Activated B cell treated with CpG ODN at 0.5 μM for 24 hours (primary cell): ENCODE measurements at regions of chr5 and their contacts with region 1.

Region 1: DNA sequence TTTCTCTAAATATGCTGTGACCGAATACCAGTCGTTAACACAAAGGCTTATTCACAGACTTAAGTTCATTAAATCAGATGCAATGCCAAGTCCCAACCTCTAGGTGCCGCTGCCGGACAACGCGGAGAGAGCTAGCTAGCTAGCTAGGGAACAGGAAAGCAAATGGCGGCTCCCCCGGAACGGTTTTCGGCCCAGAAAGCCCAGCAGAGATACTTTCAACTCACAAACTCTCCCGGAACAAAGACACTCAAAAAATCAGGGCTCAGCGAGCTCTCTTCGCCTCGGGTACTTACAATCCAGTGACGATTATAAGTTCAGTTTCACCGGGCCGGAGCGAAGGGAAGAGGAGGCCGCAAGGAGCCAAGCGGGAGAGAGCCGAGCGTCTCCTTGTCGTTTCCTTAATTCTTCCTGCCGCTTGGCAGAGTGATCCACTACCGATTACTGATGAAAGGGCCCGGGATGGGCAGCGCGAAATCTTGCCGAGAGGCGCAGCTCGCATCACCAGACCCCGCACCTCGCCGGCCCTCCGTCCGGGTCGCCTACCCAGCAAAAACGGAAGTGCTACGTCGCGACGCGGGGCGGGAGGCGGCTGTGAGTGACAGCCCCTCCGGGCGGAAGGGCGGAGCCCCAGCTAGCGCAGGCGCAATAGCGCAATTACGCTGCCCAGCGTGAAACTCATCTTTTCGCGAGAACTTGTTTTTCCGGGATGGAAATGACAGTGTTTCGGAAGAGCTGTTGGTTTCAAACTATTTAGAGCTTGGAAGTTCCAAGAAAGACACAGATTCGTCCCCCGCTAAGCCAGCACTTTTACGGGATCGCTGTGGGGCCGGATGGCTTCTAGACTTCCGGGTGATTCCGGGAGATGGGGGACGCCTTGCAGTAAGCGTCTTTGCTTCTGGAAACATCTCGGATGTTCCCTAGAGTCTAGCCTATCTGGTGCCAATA is at the start of gene TAF7:
- DNase-seq: peak; percentile 92
- ATAC-seq: peak; percentile 91
- H3K4me3 Mint-ChIP-seq: peak within 1 kb of the TSS; percentile 99
- H3K27ac Mint-ChIP-seq: peak within 1 kb of the TSS; percentile 99
- H3K4me1 Mint-ChIP-seq: peaks cover 29% of the 10 kb centered on the region
- H3K27me3 Mint-ChIP-seq: no peaks in the 10 kb centered on the region
- CTCF ChIP-seq: peak; percentile 49
- total RNA-seq, gene TAF7: 86.7 and 87.3 TPM in 2 replicates

Region 2: DNA sequence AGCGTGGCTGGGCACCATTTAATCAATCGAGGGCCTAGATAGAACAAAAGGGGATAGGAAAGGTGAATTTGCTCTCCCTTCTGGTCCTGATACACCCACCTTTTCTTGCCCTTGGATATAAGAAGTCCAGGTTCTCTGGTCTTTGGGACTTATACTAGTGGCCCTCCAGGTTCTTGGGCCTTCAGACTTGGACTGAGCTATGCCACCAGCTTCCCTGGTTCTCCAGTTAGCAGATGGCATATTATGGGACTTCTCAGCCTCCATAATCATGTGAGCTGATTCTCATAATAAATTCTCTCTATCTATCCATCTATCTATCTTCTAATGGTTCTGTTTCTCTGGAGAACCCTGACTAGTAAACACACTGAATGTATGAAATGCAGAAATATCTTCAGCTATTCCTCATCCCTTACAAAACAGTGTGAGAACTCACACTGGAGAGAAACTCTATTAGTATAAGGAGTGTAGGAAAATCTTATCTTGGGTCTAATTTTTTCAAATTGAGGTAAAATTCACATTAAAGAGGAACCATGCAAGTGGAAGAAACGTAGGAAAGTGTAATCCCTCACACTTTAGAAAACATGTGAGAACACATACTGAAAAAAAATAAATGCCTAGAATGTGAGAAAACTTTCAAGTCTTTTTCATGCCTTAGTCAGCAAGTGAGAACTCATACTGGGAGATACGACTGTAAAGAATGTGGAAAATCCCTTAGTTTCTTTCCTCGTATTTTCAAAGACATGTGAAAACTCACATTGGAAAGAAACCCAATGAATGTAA is 59.8 kb before region 1 on chr5:
- CTCF ChIA-PET with region 1: interaction called, 4 read pairs
- POLR2A ChIA-PET with region 1: no interaction called
- intact Hi-C with region 1: loop called (anchors 2 kb)
- DNase-seq: no peak
- ATAC-seq: no peak
- H3K4me3 Mint-ChIP-seq: no peak overlapping the region
- H3K27ac Mint-ChIP-seq: no peak overlapping the region
- H3K4me1 Mint-ChIP-seq: no peaks in the 10 kb centered on the region
- H3K27me3 Mint-ChIP-seq: no peaks in the 10 kb centered on the region
- CTCF ChIP-seq: no peak

Region 3: GRCh38 chr5:141272906-141273305 is 47.6 kb before region 1 on chr5:
- CTCF ChIA-PET with region 1: no interaction called
- POLR2A ChIA-PET with region 1: no interaction called
- intact Hi-C with region 1: no loop called
- DNase-seq: no peak
- ATAC-seq: no peak
- H3K4me3 Mint-ChIP-seq: no peak overlapping the region
- H3K27ac Mint-ChIP-seq: no peak overlapping the region
- H3K4me1 Mint-ChIP-seq: no peaks in the 10 kb centered on the region
- H3K27me3 Mint-ChIP-seq: no peaks in the 10 kb centered on the region
- CTCF ChIP-seq: no peak

Region 4: GRCh38 chr5:141412854-141413539 is 92.5 kb after region 1 on chr5 and contains the start of gene PCDHGA10:
- CTCF ChIA-PET with region 1: interaction called, 5 read pairs
- POLR2A ChIA-PET with region 1: no interaction called
- intact Hi-C with region 1: loop called (anchors 5 kb)
- DNase-seq: no peak
- ATAC-seq: peak; percentile 66
- H3K4me3 Mint-ChIP-seq: peak within 1 kb of the TSS; percentile 86
- H3K27ac Mint-ChIP-seq: peak within 1 kb of the TSS; percentile 41
- H3K4me1 Mint-ChIP-seq: peaks cover 21% of the 10 kb centered on the region
- H3K27me3 Mint-ChIP-seq: peaks cover 52% of the 10 kb centered on the region
- CTCF ChIP-seq: no peak
- total RNA-seq, gene PCDHGA10: 1.2 and 1.3 TPM in 2 replicates

Region 5: DNA sequence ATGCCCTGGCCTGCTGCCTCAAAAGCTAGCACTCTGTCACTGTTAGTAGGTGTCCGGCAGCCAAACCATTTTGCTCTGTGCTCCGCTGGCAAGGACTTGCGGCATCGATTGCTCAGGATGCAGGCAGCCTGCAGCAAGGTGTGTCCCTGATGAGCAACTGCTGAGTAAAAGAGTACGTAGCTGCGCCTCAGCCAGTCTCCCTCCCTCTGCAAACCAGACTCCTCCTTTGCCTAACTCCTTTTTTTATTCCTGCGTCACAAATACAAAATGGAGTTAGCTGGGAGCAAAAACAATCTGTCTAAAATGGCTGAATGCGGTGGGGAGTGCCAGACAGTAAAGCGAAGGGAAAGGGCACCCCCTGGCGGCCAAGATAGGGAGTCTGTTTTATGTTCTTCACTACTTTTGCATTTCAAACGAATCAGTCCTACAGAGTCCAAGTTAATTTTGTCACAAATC is 237.2 kb after region 1 on chr5:
- CTCF ChIA-PET with region 1: interaction called, 12 read pairs
- POLR2A ChIA-PET with region 1: interaction called, 5 read pairs
- intact Hi-C with region 1: no loop called
- DNase-seq: peak; percentile 66
- ATAC-seq: peak; percentile 82
- H3K4me3 Mint-ChIP-seq: no peak overlapping the region
- H3K27ac Mint-ChIP-seq: peak overlapping the region; percentile 72
- H3K4me1 Mint-ChIP-seq: peaks cover 4% of the 10 kb centered on the region
- H3K27me3 Mint-ChIP-seq: no peaks in the 10 kb centered on the region
- CTCF ChIP-seq: peak; percentile 38

Region 6: DNA sequence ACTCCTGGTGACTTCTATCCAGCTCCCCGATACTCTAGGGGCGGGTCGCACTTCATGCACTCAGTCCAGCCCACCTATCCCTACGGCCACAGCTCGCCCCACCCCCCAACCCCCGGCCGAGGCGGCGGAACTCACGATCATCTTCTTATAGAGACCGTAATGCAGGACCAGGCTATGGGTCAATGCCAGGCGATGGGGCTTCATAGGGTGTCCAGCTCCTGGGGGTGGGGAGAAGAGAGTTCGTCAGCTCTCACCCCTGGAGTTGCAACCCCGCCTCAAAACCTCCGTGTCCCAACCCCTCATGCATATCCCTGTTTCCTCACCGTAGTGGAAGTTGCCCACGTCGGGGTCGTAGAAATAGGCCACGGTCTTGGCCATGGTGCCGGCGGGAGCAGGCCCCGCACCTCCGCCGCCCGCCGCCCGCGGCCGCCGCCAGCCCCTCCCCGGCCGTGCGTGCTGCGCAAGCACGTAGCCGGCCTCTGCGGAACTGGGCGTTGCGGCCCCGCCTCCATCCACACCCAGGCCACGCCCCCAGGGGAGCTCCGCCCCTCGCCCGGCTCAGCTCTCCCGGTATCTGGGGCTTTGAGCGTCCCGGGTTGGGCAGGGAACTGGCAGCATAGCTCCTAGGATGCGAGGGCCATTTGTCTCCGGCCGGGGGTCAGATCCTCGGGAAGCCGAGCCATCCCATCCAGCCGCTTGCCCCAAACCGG is 316.1 kb after region 1 on chr5 and contains the starts of genes HDAC3 and RELL2:
- CTCF ChIA-PET with region 1: interaction called, 3 read pairs
- POLR2A ChIA-PET with region 1: interaction called, 6 read pairs
- intact Hi-C with region 1: loop called (anchors 2 kb)
- DNase-seq: peak; percentile 99
- ATAC-seq: peak; percentile 84
- H3K4me3 Mint-ChIP-seq: peak within 1 kb of the TSS; percentile 89
- H3K27ac Mint-ChIP-seq: peak within 1 kb of the TSS; percentile 73
- H3K4me1 Mint-ChIP-seq: peaks cover 39% of the 10 kb centered on the region
- H3K27me3 Mint-ChIP-seq: no peaks in the 10 kb centered on the region
- CTCF ChIP-seq: no peak
- total RNA-seq, gene HDAC3: 101 and 102 TPM in 2 replicates
- total RNA-seq, gene RELL2: 16.8 and 18.9 TPM in 2 replicates

Region 7: DNA sequence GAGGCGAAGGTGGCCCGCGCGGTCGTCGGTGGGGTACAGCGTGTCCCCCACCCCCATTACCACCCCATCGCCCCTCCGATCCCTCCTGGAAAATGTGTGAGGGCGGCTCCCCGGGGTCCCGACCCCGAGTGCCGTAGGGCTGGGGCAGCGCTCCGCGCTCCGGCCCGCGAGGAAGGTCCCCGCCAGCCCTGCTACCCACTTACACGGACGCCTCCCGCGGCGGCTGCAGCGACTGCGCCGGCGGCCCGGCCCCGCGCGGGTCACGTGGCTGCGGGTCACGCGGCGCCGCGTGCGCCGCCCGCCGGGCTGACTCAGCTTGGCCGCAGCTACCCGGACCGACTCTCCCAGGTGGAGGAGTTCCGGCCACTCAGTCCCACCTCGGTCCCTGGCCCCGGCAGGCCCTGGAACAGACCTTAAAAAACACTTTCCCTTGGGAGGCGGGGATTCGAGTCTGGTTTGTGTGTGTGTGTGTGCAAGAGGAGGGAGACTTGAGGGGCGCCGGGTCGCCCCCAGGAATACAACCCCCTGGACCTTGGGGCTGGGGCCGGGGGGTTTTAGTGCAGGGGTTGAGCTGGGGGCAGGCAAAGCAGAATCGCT is 692.4 kb after region 1 on chr5 and contains the start of gene GNPDA1:
- CTCF ChIA-PET with region 1: no interaction called
- POLR2A ChIA-PET with region 1: no interaction called
- intact Hi-C with region 1: loop called (anchors 10 kb)
- DNase-seq: peak; percentile 76
- ATAC-seq: peak; percentile 83
- H3K4me3 Mint-ChIP-seq: peak within 1 kb of the TSS; percentile 88
- H3K27ac Mint-ChIP-seq: peak within 1 kb of the TSS; percentile 86
- H3K4me1 Mint-ChIP-seq: peaks cover 44% of the 10 kb centered on the region
- H3K27me3 Mint-ChIP-seq: no peaks in the 10 kb centered on the region
- CTCF ChIP-seq: no peak
- total RNA-seq, gene GNPDA1: 14.2 and 15.0 TPM in 2 replicates